Naive thymus-derived CD4-positive, alpha-beta T cell (primary cell): ENCODE measurements at regions of chr17 and their contacts with region 1.

Region 1: GRCh38 chr17:49230636-49231562 is at the start of gene PHOSPHO1:
- DNase-seq: peak; percentile 70 to 88 (median 83)
- ATAC-seq: peak; percentile 97
- H3K4me3 ChIP-seq: peak within 1 kb of the TSS; percentile 62
- H3K4me3 Mint-ChIP-seq: peak within 1 kb of the TSS; percentile 81 to 94 (median 86)
- H3K27ac ChIP-seq: no peak within 1 kb of the TSS
- H3K27ac Mint-ChIP-seq: peak within 1 kb of the TSS in 7 of 9 donors; percentile 36 to 80 (median 52)
- H3K4me1 ChIP-seq: peaks cover 11 to 12% of the 10 kb centered on the region in 2 donors
- H3K4me1 Mint-ChIP-seq: peaks cover 0 to 26% (median 16%) of the 10 kb centered on the region in 7 donors
- H3K27me3 ChIP-seq: no peaks in the 10 kb centered on the region
- H3K27me3 Mint-ChIP-seq: peaks cover 0 to 43% (median 4%) of the 10 kb centered on the region in 5 donors
- total RNA-seq, gene PHOSPHO1: 0.17 TPM in 1 of 5 experiments, not detected in the others

Region 2: DNA sequence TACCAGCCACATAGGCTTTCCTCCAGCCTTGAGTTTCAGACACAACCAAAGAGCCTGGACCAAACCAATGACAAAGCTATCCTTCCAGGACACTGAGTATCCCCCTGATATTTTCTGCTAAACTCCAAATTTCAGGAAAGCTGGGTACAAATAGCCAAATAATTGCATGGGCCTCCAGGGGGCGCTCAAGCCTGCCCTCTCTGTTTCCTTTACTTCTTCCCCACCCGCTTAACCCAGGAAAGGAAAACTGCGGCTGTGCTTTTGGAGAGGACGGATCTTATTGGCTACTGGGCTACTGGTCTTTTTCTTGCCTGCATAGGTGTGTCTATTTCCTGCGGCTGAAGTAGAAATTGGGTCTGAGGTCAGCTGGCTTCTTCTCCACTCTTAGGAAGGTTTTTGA is 50.6 kb before region 1 on chr17:
- CTCF ChIA-PET with region 1: interaction called, 143 read pairs
- POLR2A ChIA-PET with region 1: interaction called, 15 read pairs
- intact Hi-C with region 1: loop called (anchors 1 kb)
- DNase-seq: peak; percentile 38 to 67 (median 58)
- ATAC-seq: peak; percentile 69
- H3K4me3 ChIP-seq: no peak overlapping the region
- H3K4me3 Mint-ChIP-seq: peak overlapping the region in 3 of 10 donors; percentile 16 to 42 (median 21)
- H3K27ac ChIP-seq: no peak overlapping the region
- H3K27ac Mint-ChIP-seq: peak overlapping the region in 1 of 9 donors; percentile 41
- H3K4me1 ChIP-seq: peaks cover 4% of the 10 kb centered on the region in 2 donors
- H3K4me1 Mint-ChIP-seq: peaks cover 0 to 5% (median 4%) of the 10 kb centered on the region in 7 donors
- H3K27me3 ChIP-seq: peaks cover 0 to 4% of the 10 kb centered on the region in 2 donors
- H3K27me3 Mint-ChIP-seq: peaks cover 0 to 8% (median 2%) of the 10 kb centered on the region in 5 donors

Region 3: GRCh38 chr17:49210158-49211029 is 20.5 kb before region 1 on chr17 and contains the starts of genes ABI3 and GNGT2:
- CTCF ChIA-PET with region 1: interaction called, 12 read pairs
- POLR2A ChIA-PET with region 1: interaction called, 4 read pairs
- intact Hi-C with region 1: loop called (anchors 1 to 2 kb)
- DNase-seq: peak; percentile 23 to 70 (median 62)
- ATAC-seq: peak; percentile 88
- H3K4me3 ChIP-seq: peak within 1 kb of the TSS; percentile 84
- H3K4me3 Mint-ChIP-seq: peak within 1 kb of the TSS; percentile 72 to 96 (median 93)
- H3K27ac ChIP-seq: peak within 1 kb of the TSS; percentile 82
- H3K27ac Mint-ChIP-seq: peak within 1 kb of the TSS; percentile 80 to 95 (median 89)
- H3K4me1 ChIP-seq: peaks cover 54 to 58% of the 10 kb centered on the region in 2 donors
- H3K4me1 Mint-ChIP-seq: peaks cover 63 to 81% (median 71%) of the 10 kb centered on the region in 7 donors
- H3K27me3 ChIP-seq: no peaks in the 10 kb centered on the region
- H3K27me3 Mint-ChIP-seq: no peaks in the 10 kb centered on the region
- total RNA-seq, gene ABI3: 8.2 to 57.8 (median 11.0) TPM
- total RNA-seq, gene GNGT2: 2.8 to 16.9 (median 5.1) TPM

Region 4: DNA sequence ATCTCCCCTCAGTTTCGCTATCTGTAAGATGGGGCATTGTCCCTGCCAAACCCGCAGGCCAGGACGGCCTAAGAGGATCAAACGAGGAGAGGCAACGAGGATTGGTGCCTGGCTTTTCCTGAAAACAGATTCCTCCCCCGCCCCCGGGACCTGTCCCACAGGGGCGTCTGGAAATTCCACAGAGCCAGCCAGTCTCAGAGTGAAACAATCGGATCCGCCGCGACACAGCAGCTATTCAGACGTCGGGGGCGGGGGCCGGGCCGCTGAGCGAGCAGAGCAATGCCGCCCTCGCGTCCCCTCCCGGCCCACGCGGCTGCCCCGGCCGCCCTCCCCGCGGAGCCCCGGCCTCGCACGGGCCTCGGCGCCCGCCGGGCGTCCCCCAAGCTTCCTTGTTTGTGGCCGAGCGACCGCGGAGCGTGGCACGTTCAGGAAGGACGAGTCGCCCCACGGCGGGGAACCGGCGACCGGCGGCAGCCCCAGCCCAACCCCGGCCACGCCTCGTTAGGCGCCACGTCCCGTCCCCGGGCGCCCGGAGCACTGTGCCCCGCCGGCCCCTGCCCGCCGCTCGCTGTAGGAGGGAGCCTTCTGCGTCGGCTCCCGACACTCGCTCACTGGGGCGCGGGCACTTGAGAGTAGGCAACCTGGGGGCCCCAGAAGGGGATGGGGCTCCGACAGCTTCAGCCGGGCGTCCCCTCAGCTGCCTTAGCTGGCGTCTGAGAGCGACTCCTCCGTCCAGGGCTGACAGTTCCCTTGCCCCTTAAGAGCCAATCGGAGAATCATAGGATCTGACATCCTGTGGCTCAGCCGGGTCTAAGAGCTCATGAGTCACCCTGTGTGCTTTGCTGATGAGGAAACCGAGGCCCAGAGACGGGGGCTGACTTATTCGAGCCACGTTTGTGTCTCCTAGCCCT is 29.4 kb after region 1 on chr17:
- CTCF ChIA-PET with region 1: no interaction called
- POLR2A ChIA-PET with region 1: no interaction called
- intact Hi-C with region 1: loop called in 1 of 2 experiments (anchors 2 kb)
- DNase-seq: peak; percentile 4 to 76 (median 30)
- ATAC-seq: peak; percentile 80
- H3K4me3 ChIP-seq: peak overlapping the region; percentile 64
- H3K4me3 Mint-ChIP-seq: peak overlapping the region; percentile 63 to 86 (median 82)
- H3K27ac ChIP-seq: no peak overlapping the region
- H3K27ac Mint-ChIP-seq: peak overlapping the region in 1 of 9 donors; percentile 55
- H3K4me1 ChIP-seq: peaks cover 5 to 6% of the 10 kb centered on the region in 2 donors
- H3K4me1 Mint-ChIP-seq: peaks cover 0 to 10% (median 8%) of the 10 kb centered on the region in 7 donors
- H3K27me3 ChIP-seq: no peaks in the 10 kb centered on the region
- H3K27me3 Mint-ChIP-seq: peaks cover 0 to 22% (median 8%) of the 10 kb centered on the region in 5 donors

Region 5: DNA sequence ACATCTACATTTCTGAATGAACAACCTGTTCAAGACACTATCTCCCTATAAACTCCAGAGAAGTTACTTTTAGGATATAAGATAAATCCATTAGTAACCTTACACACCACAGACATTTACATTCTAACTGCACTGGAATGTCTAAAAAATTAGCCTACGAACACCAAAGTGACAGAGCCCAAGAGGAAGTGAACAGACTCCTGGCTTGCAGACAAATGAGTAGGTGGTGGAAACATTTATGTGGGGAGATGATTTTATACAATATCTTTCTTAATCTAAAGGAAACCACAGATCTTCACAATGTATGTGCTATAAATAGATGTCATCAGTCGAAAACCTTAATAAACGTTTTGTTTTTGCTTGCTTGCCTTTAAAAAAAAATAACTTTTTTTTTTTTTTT is 112.4 kb after region 1 on chr17:
- CTCF ChIA-PET with region 1: no interaction called
- POLR2A ChIA-PET with region 1: no interaction called
- intact Hi-C with region 1: no loop called
- DNase-seq: peak in 4 of 9 donors; percentile 12 to 35 (median 26)
- ATAC-seq: no peak
- H3K4me3 ChIP-seq: peak overlapping the region; percentile 10
- H3K4me3 Mint-ChIP-seq: peak overlapping the region; percentile 35 to 85 (median 79)
- H3K27ac ChIP-seq: no peak overlapping the region
- H3K27ac Mint-ChIP-seq: peak overlapping the region; percentile 6 to 90 (median 72)
- H3K4me1 ChIP-seq: peaks cover 13 to 51% of the 10 kb centered on the region in 2 donors
- H3K4me1 Mint-ChIP-seq: peaks cover 39 to 82% (median 68%) of the 10 kb centered on the region in 7 donors
- H3K27me3 ChIP-seq: no peaks in the 10 kb centered on the region
- H3K27me3 Mint-ChIP-seq: peaks cover 0 to 9% (median 0%) of the 10 kb centered on the region in 5 donors

Region 6: GRCh38 chr17:49361902-49362722 is 131.2 kb after region 1 on chr17 and contains the start of gene ZNF652:
- CTCF ChIA-PET with region 1: no interaction called
- POLR2A ChIA-PET with region 1: interaction called, 3 read pairs
- intact Hi-C with region 1: loop called in 1 of 2 experiments (anchors 2 kb)
- DNase-seq: peak; percentile 86 to 98 (median 97)
- ATAC-seq: peak; percentile 81
- H3K4me3 ChIP-seq: peak within 1 kb of the TSS; percentile 67
- H3K4me3 Mint-ChIP-seq: peak within 1 kb of the TSS; percentile 88 to 99 (median 96)
- H3K27ac ChIP-seq: peak within 1 kb of the TSS; percentile 71
- H3K27ac Mint-ChIP-seq: peak within 1 kb of the TSS; percentile 92 to 97 (median 97)
- H3K4me1 ChIP-seq: peaks cover 26 to 33% of the 10 kb centered on the region in 2 donors
- H3K4me1 Mint-ChIP-seq: peaks cover 48 to 58% (median 53%) of the 10 kb centered on the region in 7 donors
- H3K27me3 ChIP-seq: no peaks in the 10 kb centered on the region
- H3K27me3 Mint-ChIP-seq: no peaks in the 10 kb centered on the region
- total RNA-seq, gene ZNF652: 33.8 to 64.4 (median 49.9) TPM